ENCODE measurements at regions of chr5 and their contacts with region 1.

Region 1: DNA sequence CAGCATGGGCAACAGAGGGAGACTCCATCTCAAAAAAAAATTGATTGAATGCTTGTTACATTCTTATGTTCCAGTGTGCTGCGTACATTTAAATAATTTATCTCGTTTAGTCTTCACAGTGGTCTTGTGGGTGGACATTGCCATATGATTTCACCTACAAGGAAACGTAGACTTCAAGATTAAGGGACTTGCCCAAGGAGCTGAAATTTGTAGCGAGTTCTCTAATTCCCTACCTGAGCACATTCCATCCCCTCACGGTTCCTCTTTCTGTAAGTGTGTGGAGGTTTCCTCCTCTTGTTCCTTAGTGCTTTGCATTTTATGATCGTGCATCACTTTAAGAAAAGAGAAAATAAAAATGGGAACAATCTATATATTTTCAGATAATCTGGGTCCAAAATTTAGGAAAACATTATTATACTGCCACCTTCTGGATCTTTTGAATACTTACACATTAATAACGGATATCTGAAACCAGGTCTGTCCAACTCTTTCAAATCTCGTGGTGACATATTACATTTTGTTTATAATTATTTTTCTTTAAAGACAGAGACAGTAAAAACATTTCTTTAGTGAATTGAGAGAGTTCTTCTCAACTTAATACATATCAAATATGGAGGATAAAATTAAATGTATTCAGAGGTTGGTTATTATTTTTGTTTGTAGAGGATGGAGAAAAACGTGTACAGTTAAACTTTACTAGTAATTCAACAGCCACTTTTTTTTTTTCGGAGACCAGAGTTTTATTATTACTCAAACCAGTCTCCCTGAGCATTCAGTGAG is 29.9 kb upstream of the C7 start:
- DNase-seq: no peak
- ATAC-seq: no peak

Region 2: DNA sequence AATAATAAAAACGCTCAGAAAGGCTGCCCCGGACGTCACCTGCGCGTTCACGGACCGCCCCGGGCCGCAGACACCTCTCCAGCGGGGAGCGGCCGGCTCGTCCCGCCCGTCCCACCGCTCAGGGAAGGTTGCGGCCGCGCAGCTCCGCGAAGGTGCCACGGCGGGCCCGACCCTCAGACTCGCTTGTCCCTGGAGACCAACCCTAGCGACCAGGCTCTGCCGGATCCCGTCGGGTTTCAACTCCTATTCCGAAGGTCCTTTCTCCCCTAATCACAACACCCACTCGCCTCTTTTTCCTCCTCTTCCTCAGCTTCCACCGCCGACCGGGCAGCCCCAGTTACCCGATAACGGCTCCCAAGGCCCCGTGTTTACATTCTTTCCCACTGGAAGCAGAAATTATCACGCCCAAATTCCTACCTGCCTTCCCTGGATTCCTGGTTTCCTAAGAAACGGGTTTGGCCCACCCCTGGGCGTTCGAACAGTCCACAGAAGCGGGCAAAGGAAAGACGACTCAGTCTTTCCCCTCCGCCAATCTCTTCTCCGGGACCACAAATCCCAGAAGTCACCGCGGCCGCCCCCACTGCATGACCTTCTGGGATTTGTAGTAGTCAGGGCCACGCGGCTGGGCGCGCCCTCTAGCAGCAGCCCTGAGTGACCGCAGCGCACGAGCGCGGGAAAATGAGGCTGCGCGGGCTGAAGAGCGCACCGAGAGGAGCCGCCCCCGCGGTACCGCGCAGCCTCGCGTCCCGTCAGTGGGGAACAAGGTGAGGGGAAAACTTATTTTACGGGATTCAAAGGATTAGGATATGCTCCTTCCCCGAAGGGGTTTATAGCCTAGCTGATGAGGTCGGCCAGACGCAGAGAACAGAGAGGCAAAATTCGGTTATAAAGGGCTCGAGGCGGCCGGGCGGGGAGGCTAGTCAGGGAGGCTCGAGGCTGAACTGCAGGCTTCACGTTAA is 123.7 kb before region 1 on chr5 and contains the start of gene TTC33:
- intact Hi-C with region 1: loop called (anchors 10 kb)
- DNase-seq: peak; percentile 97
- ATAC-seq: peak; percentile 98
- total RNA-seq, gene TTC33: 14.8 TPM

Region 3: GRCh38 chr5:40770764-40771163 is 108.6 kb before region 1 on chr5:
- intact Hi-C with region 1: no loop called
- DNase-seq: no peak
- ATAC-seq: no peak

Measured in left ventricle myocardium superior (tissue), 1 donor.